ENCODE measurements at regions of chr1 and their contacts with region 1.

Region 1: DNA sequence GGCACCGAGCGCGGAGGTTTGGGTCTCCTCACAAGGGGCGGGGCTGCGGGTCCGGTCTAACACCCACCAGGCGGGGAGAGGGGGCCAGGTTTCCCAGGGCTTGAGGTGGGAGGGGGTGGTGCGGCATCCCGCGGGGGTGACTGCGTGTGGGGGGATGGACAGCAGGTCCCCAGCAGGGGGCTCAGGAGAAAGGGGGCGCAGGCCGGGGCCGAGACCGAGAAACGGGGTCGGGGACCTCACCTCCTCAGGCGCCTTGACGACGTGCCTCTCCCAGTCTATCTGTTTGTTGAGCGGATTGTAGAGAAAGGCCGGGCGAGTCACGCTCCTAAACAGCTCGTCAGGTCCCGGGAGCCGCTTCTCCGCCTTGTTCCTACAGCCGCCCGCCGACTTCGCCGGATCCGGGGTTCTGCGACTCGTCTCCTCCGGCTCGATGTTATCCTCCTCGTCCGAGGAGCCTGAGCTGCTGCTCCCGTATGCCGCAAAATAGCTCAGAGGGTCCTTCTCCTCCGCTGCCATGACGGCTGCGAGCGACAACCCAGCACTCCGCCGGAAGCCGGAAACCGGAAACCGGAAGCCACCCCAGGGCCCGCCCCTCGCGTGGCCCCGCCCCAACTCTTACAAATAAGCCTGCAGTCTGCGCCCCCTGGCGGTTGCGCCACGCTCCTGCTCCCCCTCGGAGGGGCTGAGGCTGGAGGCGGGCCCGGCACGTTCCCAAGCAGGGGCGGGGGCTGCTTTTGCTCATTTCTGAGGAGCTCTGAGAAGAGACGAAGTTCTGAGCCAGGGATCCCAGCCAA is at the start of gene C1orf52:
- DNase-seq: peak; percentile 97
- H3K4me3 Mint-ChIP-seq: peak within 1 kb of the TSS; percentile 96
- H3K27ac Mint-ChIP-seq: peak within 1 kb of the TSS; percentile 89
- H3K4me1 Mint-ChIP-seq: peaks cover 38% of the 10 kb centered on the region
- H3K27me3 Mint-ChIP-seq: no peaks in the 10 kb centered on the region
- total RNA-seq, gene C1orf52: 28.3 to 29.5 TPM

Region 2: DNA sequence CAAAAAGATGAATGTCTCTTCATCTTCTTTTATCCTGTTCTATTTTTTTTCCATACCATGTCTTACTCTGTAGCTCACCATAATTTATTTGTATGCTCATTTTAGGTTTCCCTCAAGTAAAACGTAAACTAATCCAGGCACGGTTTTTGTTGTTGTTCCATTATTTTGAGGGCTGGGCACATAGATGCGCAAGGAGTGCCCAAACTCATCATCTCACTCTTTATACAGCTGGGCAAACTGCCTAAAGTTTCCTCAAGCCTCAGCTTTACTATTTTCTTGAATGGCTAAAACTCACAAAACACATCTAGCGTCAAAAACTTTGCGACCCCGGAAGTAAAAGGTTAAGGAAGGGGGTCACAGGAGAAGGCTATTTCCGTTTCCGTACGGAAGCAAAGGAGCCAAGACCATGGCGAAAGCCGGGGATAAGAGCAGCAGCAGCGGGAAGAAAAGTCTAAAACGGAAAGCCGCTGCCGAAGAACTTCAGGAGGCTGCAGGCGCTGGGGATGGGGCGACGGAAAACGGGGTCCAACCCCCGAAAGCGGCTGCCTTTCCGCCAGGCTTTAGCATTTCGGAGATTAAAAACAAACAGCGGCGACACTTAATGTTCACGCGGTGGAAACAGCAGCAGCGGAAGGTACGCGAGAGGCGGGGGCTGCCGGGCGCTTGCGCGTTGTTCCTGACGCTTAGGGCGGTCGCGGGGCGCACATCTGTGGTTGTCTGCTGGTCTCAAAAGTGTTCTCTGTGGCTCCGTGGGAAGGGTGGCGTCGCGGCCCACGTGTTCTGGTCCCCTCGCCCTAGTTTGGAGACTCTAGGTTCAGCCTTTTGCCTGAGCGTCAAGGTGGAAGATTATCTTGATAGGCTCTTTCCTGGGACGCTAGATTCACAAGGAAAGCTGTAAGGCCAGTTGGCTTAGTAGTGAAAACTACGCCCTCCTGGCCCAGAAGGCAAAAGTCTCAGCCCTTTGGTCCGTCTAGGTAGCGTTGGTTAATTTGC is 780.1 kb before region 1 on chr1 and contains the start of gene RPF1:
- CTCF ChIA-PET with region 1: no interaction called
- intact Hi-C with region 1: loop called (anchors 1 kb)
- DNase-seq: peak; percentile 74
- H3K4me3 Mint-ChIP-seq: peak within 1 kb of the TSS; percentile 99
- H3K27ac Mint-ChIP-seq: peak within 1 kb of the TSS; percentile 95
- H3K4me1 Mint-ChIP-seq: peaks cover 34% of the 10 kb centered on the region
- H3K27me3 Mint-ChIP-seq: peaks cover 18% of the 10 kb centered on the region
- total RNA-seq, gene RPF1: 57.2 to 57.6 TPM

Region 3: DNA sequence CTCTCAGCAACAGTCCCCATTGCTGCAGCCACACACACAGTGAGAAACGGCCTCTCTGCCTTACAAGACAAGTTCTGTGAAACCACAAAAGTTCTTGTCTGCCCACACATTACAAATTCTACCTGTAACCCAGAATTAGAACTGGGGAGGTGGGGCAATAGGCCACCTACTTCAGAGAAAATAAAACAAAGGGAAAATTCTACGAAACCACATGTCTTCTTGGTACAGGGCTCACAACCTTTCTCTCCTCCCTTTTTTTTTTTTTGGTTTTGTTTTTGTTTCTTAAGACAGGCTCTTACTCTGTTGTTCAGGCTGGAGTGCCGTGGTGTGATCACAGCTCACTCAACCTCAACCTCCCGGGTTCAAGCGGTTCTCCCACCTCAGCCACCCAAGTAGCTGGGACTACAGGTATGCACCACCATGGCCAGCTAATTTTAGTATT is 396.5 kb before region 1 on chr1:
- CTCF ChIA-PET with region 1: no interaction called
- intact Hi-C with region 1: loop called (anchors 2 kb)
- DNase-seq: peak; percentile 63
- H3K4me3 Mint-ChIP-seq: peak overlapping the region; percentile 16
- H3K27ac Mint-ChIP-seq: peak overlapping the region; percentile 51
- H3K4me1 Mint-ChIP-seq: peaks cover 49% of the 10 kb centered on the region
- H3K27me3 Mint-ChIP-seq: peaks cover 3% of the 10 kb centered on the region

Region 4: GRCh38 chr1:85109475-85109874 is 149.8 kb before region 1 on chr1:
- CTCF ChIA-PET with region 1: interaction called, 30 read pairs
- intact Hi-C with region 1: loop called (anchors 1 kb)
- DNase-seq: peak; percentile 48
- H3K4me3 Mint-ChIP-seq: no peak overlapping the region
- H3K27ac Mint-ChIP-seq: no peak overlapping the region
- H3K4me1 Mint-ChIP-seq: no peaks in the 10 kb centered on the region
- H3K27me3 Mint-ChIP-seq: no peaks in the 10 kb centered on the region

Region 5: GRCh38 chr1:85707990-85708828 is 448.9 kb after region 1 on chr1 and contains the start of gene ZNHIT6:
- CTCF ChIA-PET with region 1: no interaction called
- intact Hi-C with region 1: loop called (anchors 1 kb)
- DNase-seq: peak; percentile 93
- H3K4me3 Mint-ChIP-seq: no peak within 1 kb of the TSS
- H3K27ac Mint-ChIP-seq: no peak within 1 kb of the TSS
- H3K4me1 Mint-ChIP-seq: peaks cover 21% of the 10 kb centered on the region
- H3K27me3 Mint-ChIP-seq: no peaks in the 10 kb centered on the region
- total RNA-seq, gene ZNHIT6: 19.8 to 19.9 TPM